Posterior cingulate gyrus (tissue), 11 donors: ENCODE measurements at regions of chr1 and their contacts with region 1.

Region 1: DNA sequence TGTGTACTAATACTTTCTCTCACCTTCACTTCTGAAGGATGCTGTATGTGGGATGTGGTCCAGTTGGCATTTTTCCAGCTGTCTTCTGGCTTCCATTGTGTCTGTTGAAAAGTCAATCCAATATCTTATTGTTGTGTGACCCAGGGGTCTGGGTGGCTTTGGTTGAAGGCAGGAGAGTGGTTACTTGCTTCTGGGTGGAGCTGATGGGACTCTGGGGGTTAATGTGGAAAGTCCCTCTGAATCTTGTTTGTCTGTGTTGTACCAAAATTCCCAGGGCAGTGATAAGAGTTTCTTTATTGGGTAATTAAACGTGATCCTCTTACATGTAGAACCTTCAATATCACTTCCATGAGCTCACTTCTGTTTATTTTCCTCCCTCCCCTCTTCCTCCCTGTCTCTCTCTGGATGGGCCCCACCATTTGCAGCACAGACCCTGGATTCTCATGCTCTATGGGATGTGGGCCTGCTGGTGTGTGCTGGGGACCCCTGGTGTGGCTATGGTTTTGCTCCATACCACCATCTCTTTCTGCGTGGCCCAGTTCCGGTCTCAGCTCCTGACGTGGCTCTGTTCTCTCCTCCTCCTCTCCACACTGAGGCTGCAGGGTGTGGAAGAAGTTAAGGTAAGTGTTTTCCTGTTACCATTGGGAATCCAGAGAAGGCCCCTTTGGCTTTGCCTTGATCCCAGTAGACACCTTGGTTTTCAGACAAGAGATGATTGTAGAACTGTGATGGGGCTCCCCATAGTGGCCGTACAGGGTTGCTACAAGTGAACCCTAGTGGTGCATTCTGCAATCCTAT is 71.5 kb downstream of the HHAT start:
- DNase-seq: peak; percentile 36 to 95 (median 71)

Region 2: DNA sequence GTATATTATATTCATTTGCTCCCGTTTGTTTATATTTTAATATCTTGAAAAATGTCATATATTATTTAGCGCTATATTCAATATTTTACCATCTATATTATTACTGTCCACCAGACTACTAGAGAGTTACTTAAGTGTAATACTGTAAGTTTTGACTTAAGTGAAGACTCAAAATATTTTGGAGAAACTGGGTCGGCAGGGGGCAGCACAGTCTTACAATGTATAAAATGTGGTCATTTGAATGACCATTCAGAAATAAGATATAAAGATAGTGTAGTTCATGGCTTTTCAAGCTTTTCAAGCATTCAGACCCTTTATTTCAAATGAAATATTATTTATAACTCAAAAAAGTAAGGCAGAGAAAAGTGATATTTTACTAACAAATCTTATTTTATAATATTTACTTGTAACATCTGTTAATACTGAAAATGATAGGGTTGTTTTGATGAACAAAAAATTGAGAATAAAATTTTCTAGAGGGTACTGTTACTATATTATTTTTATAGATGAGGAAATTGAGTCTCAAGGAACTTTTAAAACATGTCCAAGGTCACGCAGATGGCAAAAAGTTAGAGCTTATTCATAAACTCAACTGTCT is 256.7 kb before region 1 on chr1:
- intact Hi-C with region 1: loop called (anchors 5 kb)
- DNase-seq: peak in 9 of 10 donors; percentile 15 to 87 (median 74)

Region 3: DNA sequence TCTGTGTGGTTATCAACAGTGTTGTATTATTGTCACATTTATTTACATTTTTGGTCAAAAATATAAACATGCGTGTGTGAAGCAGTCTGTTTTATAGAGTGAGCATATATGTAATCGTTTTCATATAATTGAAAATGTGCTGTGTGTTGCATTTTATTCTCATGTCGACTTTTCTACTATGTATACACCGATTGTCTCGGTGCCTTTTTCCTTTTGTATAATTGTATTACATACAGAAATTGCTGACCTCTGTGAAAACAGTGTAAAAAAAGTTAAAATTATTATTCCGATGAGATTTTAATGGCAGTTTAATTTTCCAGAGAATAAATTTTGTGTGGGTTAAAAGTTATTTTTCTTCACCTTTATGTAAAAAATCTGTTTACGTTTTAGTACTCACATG is 230.0 kb before region 1 on chr1:
- intact Hi-C with region 1: no loop called
- DNase-seq: no peak

Region 4: GRCh38 chr1:210360852-210361477 is 39.3 kb before region 1 on chr1:
- intact Hi-C with region 1: loop called (anchors 1 kb)
- DNase-seq: no peak